ENCODE measurements at regions of chr2 and their contacts with region 1.

Region 1: GRCh38 chr2:3651691-3652648 is 6.0 kb upstream of the ALLC start:
- DNase-seq: peak; percentile 29 to 87 (median 77)
- ATAC-seq: peak; percentile 74
- H3K4me3 ChIP-seq: peak overlapping the region; percentile 73
- H3K4me3 Mint-ChIP-seq: peak overlapping the region; percentile 78 to 94 (median 87)
- H3K27ac ChIP-seq: peak overlapping the region; percentile 4
- H3K27ac Mint-ChIP-seq: peak overlapping the region; percentile 58 to 98 (median 90)
- H3K4me1 ChIP-seq: no peaks in the 10 kb centered on the region
- H3K4me1 Mint-ChIP-seq: peaks cover 5 to 18% (median 9%) of the 10 kb centered on the region in 7 donors
- H3K27me3 ChIP-seq: no peaks in the 10 kb centered on the region
- H3K27me3 Mint-ChIP-seq: no peaks in the 10 kb centered on the region

Region 2: GRCh38 chr2:2116657-2117056 is 1535.3 kb before region 1 on chr2:
- CTCF ChIA-PET with region 1: no interaction called
- POLR2A ChIA-PET with region 1: no interaction called
- intact Hi-C with region 1: loop called in 1 of 2 experiments (anchors 1 kb)
- DNase-seq: no peak
- ATAC-seq: no peak
- H3K4me3 ChIP-seq: no peak overlapping the region
- H3K4me3 Mint-ChIP-seq: no peak overlapping the region
- H3K27ac ChIP-seq: no peak overlapping the region
- H3K27ac Mint-ChIP-seq: no peak overlapping the region
- H3K4me1 ChIP-seq: no peaks in the 10 kb centered on the region
- H3K4me1 Mint-ChIP-seq: peaks cover 4 to 20% (median 8%) of the 10 kb centered on the region in 7 donors
- H3K27me3 ChIP-seq: no peaks in the 10 kb centered on the region
- H3K27me3 Mint-ChIP-seq: peaks cover 5 to 26% (median 12%) of the 10 kb centered on the region in 5 donors

Region 3: DNA sequence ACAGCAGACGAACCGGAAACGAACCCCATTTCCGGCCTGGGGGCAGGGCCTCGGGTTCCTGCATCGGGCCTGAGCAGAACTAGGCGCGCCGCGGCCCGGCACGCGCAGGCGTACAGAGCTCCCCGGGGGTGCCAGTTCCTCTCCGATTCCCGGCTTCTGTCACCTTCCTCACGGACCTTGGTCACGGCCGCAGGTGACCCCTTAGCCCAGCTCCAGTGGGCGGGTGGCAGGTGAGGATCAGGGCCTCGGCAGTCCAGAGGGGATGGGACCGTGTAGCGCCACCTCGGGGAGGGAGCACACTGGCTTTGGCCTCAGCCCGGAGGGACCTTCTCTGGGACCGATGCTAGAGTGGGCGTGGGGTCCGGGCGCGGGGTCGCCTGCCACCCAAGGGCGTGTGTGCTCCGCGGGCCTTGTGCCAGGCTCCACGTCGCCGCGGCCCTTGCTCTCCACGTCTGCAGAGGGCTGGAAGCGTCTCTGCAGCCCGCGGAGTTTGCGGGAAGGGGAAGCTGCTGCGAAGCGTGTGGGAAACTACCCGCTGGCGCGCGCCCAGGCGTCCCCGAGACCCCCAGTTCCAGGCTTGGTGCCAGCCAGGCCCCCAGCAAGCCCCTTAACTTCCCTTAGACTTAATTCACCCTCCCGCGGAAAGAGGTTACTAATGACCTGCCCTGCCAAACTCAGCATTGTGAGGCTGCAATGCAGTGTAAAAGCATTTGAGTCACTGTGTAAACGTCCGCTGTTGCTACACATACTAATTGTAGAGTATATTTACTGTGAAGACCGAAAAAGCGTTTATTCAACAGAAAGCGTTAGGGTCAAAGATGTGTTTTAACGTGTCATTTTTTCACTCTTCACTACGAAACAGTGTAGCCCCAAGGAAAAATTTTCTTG is 272.1 kb before region 1 on chr2 and contains the start of gene TRAPPC12:
- CTCF ChIA-PET with region 1: interaction called, 3 read pairs
- POLR2A ChIA-PET with region 1: interaction called, 7 read pairs
- intact Hi-C with region 1: loop called (anchors 1 kb)
- DNase-seq: peak; percentile 83 to 94 (median 93)
- ATAC-seq: peak; percentile 87
- H3K4me3 ChIP-seq: peak within 1 kb of the TSS; percentile 94
- H3K4me3 Mint-ChIP-seq: peak within 1 kb of the TSS; percentile 96 to 99 (median 98)
- H3K27ac ChIP-seq: peak within 1 kb of the TSS; percentile 87
- H3K27ac Mint-ChIP-seq: peak within 1 kb of the TSS; percentile 94 to 99 (median 99)
- H3K4me1 ChIP-seq: peaks cover 24 to 29% of the 10 kb centered on the region in 2 donors
- H3K4me1 Mint-ChIP-seq: peaks cover 21 to 78% (median 52%) of the 10 kb centered on the region in 7 donors
- H3K27me3 ChIP-seq: no peaks in the 10 kb centered on the region
- H3K27me3 Mint-ChIP-seq: no peaks in the 10 kb centered on the region
- total RNA-seq, gene TRAPPC12: 90.5 to 160 (median 121) TPM

Region 4: GRCh38 chr2:3433339-3433699 is 218.7 kb before region 1 on chr2:
- CTCF ChIA-PET with region 1: no interaction called
- POLR2A ChIA-PET with region 1: no interaction called
- intact Hi-C with region 1: no loop called
- DNase-seq: no peak
- ATAC-seq: no peak
- H3K4me3 ChIP-seq: no peak overlapping the region
- H3K4me3 Mint-ChIP-seq: no peak overlapping the region
- H3K27ac ChIP-seq: no peak overlapping the region
- H3K27ac Mint-ChIP-seq: no peak overlapping the region
- H3K4me1 ChIP-seq: no peaks in the 10 kb centered on the region
- H3K4me1 Mint-ChIP-seq: peaks cover 0 to 5% (median 0%) of the 10 kb centered on the region in 7 donors
- H3K27me3 ChIP-seq: no peaks in the 10 kb centered on the region
- H3K27me3 Mint-ChIP-seq: no peaks in the 10 kb centered on the region

Region 5: GRCh38 chr2:3518496-3519254 is 133.3 kb before region 1 on chr2:
- CTCF ChIA-PET with region 1: interaction called, 3 read pairs
- POLR2A ChIA-PET with region 1: interaction called, 13 read pairs
- intact Hi-C with region 1: loop called (anchors 1 kb)
- DNase-seq: peak; percentile 96 to 99 (median 98)
- ATAC-seq: peak; percentile 83
- H3K4me3 ChIP-seq: peak overlapping the region; percentile 89
- H3K4me3 Mint-ChIP-seq: peak overlapping the region; percentile 83 to 96 (median 92)
- H3K27ac ChIP-seq: peak overlapping the region; percentile 96
- H3K27ac Mint-ChIP-seq: peak overlapping the region; percentile 84 to 96 (median 93)
- H3K4me1 ChIP-seq: peaks cover 18% of the 10 kb centered on the region in 2 donors
- H3K4me1 Mint-ChIP-seq: peaks cover 27 to 59% (median 47%) of the 10 kb centered on the region in 7 donors
- H3K27me3 ChIP-seq: no peaks in the 10 kb centered on the region
- H3K27me3 Mint-ChIP-seq: peaks cover 0 to 2% (median 0%) of the 10 kb centered on the region in 5 donors

Region 6: GRCh38 chr2:3575534-3576262 is 76.3 kb before region 1 on chr2:
- CTCF ChIA-PET with region 1: interaction called, 3 read pairs
- POLR2A ChIA-PET with region 1: interaction called, 14 read pairs
- intact Hi-C with region 1: loop called (anchors 1 kb)
- DNase-seq: peak in 7 of 9 donors; percentile 24 to 52 (median 33)
- ATAC-seq: peak; percentile 41
- H3K4me3 ChIP-seq: peak overlapping the region; percentile 76
- H3K4me3 Mint-ChIP-seq: peak overlapping the region; percentile 77 to 96 (median 90)
- H3K27ac ChIP-seq: peak overlapping the region; percentile 87
- H3K27ac Mint-ChIP-seq: peak overlapping the region; percentile 84 to 97 (median 92)
- H3K4me1 ChIP-seq: peaks cover 14 to 25% of the 10 kb centered on the region in 2 donors
- H3K4me1 Mint-ChIP-seq: peaks cover 25 to 52% (median 42%) of the 10 kb centered on the region in 7 donors
- H3K27me3 ChIP-seq: no peaks in the 10 kb centered on the region
- H3K27me3 Mint-ChIP-seq: no peaks in the 10 kb centered on the region

Region 7: GRCh38 chr2:3789256-3789655 is 137.3 kb after region 1 on chr2:
- CTCF ChIA-PET with region 1: no interaction called
- POLR2A ChIA-PET with region 1: no interaction called
- intact Hi-C with region 1: no loop called
- DNase-seq: no peak
- ATAC-seq: no peak
- H3K4me3 ChIP-seq: no peak overlapping the region
- H3K4me3 Mint-ChIP-seq: no peak overlapping the region
- H3K27ac ChIP-seq: no peak overlapping the region
- H3K27ac Mint-ChIP-seq: no peak overlapping the region
- H3K4me1 ChIP-seq: no peaks in the 10 kb centered on the region
- H3K4me1 Mint-ChIP-seq: no peaks in the 10 kb centered on the region
- H3K27me3 ChIP-seq: no peaks in the 10 kb centered on the region
- H3K27me3 Mint-ChIP-seq: peaks cover 0 to 8% (median 4%) of the 10 kb centered on the region in 5 donors

Region 8: DNA sequence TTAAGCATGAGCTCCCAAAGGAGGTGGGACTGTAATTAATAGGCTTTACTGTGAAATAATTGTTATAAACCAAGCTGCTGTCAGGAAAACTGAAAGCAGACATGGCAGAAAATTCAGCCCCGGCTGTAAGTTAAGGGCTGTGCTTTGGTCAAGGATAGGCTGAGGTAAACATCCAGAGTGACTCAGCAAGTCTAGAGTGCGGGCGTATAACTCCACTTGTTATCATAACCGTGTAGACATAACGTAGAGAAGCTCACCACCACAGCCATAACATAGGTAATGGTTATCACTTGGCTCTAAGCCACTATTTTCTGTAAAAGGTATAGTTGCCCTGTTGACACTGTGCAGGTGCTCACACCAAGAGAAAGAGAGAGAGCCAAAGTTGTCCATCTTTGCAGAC is 368.2 kb after region 1 on chr2:
- CTCF ChIA-PET with region 1: no interaction called
- POLR2A ChIA-PET with region 1: no interaction called
- intact Hi-C with region 1: no loop called
- DNase-seq: no peak
- ATAC-seq: no peak
- H3K4me3 ChIP-seq: no peak overlapping the region
- H3K4me3 Mint-ChIP-seq: no peak overlapping the region
- H3K27ac ChIP-seq: no peak overlapping the region
- H3K27ac Mint-ChIP-seq: no peak overlapping the region
- H3K4me1 ChIP-seq: no peaks in the 10 kb centered on the region
- H3K4me1 Mint-ChIP-seq: no peaks in the 10 kb centered on the region
- H3K27me3 ChIP-seq: no peaks in the 10 kb centered on the region
- H3K27me3 Mint-ChIP-seq: no peaks in the 10 kb centered on the region

Region 9: GRCh38 chr2:4214444-4215200 is 562.7 kb after region 1 on chr2:
- CTCF ChIA-PET with region 1: no interaction called
- POLR2A ChIA-PET with region 1: no interaction called
- intact Hi-C with region 1: no loop called
- DNase-seq: no peak
- ATAC-seq: no peak
- H3K4me3 ChIP-seq: no peak overlapping the region
- H3K4me3 Mint-ChIP-seq: no peak overlapping the region
- H3K27ac ChIP-seq: no peak overlapping the region
- H3K27ac Mint-ChIP-seq: no peak overlapping the region
- H3K4me1 ChIP-seq: no peaks in the 10 kb centered on the region
- H3K4me1 Mint-ChIP-seq: no peaks in the 10 kb centered on the region
- H3K27me3 ChIP-seq: no peaks in the 10 kb centered on the region
- H3K27me3 Mint-ChIP-seq: peaks cover 0 to 4% (median 0%) of the 10 kb centered on the region in 5 donors